Spleen (tissue), 13 donors: ENCODE measurements at regions of chr3 and their contacts with region 1.

Region 1: GRCh38 chr3:184017672-184018423 is at the start of gene ABCC5:
- DNase-seq: peak; percentile 96
- H3K4me3 ChIP-seq: peak within 1 kb of the TSS; percentile 61 to 100 (median 97)
- H3K27ac ChIP-seq: peak within 1 kb of the TSS; percentile 59 to 90 (median 80)
- H3K4me1 ChIP-seq: peaks cover 0 to 36% (median 20%) of the 10 kb centered on the region in 6 donors
- H3K27me3 ChIP-seq: peaks cover 0 to 2% (median 0%) of the 10 kb centered on the region in 7 donors
- CTCF ChIP-seq: peak in 10 of 11 experiments; percentile 49 to 87 (median 70)
- POLR2A ChIP-seq: no peak
- total RNA-seq, gene ABCC5: 44.4 to 112 (median 71.9) TPM

Region 2: GRCh38 chr3:183895296-183895695 is 122.6 kb before region 1 on chr3:
- intact Hi-C with region 1: loop called (anchors 5 kb)
- DNase-seq: no peak
- H3K4me3 ChIP-seq: no peak overlapping the region
- H3K27ac ChIP-seq: no peak overlapping the region
- H3K4me1 ChIP-seq: peaks cover 0 to 8% (median 2%) of the 10 kb centered on the region in 6 donors
- H3K27me3 ChIP-seq: peaks cover 0 to 47% (median 6%) of the 10 kb centered on the region in 7 donors
- CTCF ChIP-seq: peak; percentile 70 to 93 (median 85)
- POLR2A ChIP-seq: no peak

Region 3: DNA sequence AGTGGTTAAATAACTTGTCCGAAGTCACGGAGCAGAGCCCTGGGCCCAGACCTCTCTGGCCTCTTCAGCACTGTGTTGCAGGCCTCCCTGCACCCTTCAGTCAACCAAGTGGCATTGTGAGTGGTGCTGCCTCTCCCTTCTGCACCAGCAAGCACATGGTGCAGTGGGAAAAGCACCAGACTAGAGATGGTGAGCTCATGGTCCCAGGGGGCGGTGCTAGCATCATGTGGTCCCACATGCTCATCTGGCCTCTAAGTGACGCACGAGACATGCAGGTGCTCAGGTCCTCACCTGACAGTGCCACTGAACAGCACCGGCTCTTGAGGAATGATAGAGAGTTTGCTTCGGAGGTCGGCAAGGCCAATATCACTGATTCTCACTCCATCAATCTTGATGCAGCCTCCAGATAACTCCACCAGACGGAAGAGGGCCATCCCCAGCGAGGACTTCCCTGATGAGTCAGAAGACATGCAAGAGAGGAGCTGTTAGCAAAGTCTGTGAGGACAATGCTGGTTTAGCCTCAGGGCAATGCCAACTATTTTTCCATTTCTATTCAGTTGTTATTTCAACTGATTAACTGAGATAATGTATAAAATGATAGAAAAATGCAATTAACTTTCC is 80.1 kb before region 1 on chr3:
- intact Hi-C with region 1: no loop called
- DNase-seq: no peak
- H3K4me3 ChIP-seq: no peak overlapping the region
- H3K27ac ChIP-seq: no peak overlapping the region
- H3K4me1 ChIP-seq: no peaks in the 10 kb centered on the region
- H3K27me3 ChIP-seq: no peaks in the 10 kb centered on the region
- CTCF ChIP-seq: no peak
- POLR2A ChIP-seq: no peak

Region 4: DNA sequence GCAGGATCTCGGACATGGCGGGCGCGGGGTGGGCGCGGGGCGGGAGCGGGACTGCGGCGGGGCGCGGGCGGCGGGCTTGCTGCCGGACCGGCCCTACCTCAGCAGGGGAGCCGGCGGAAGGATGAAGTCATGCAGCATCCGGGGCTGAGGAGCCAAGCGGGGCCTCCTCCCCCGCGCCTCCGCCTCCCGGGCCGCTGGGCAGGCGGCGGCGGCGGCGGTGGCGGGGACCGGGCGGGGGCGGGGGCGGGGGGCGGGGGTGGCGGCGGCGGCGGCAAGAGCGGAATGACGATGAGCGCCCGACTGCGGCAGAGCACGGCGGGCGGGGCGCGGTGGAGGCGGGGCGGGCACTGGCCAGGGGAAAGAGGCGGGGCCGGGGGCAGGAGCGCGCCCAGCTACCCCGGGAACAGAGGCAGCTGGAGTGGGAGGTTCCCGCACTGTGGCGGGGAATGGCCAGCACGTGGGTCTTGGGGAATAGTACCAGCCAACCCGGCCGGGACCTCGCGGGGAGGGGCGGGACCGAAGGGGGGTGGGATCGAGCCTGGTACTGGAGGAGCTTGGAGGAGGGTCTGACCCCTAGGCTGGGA is 243.5 kb after region 1 on chr3 and contains the start of gene CAMK2N2:
- intact Hi-C with region 1: no loop called
- DNase-seq: peak; percentile 85
- H3K4me3 ChIP-seq: peak within 1 kb of the TSS; percentile 34 to 75 (median 54)
- H3K27ac ChIP-seq: peak within 1 kb of the TSS in 2 of 8 donors; percentile 13 to 24
- H3K4me1 ChIP-seq: peaks cover 17 to 39% (median 32%) of the 10 kb centered on the region in 6 donors
- H3K27me3 ChIP-seq: peaks cover 3 to 82% (median 55%) of the 10 kb centered on the region in 7 donors
- CTCF ChIP-seq: no peak
- POLR2A ChIP-seq: no peak
- total RNA-seq, gene CAMK2N2: 0.35 TPM in 1 of 7 donors, not detected in the others